AG04449 (cell line): ENCODE measurements at regions of chr19 and their contacts with region 1.

Region 1: DNA sequence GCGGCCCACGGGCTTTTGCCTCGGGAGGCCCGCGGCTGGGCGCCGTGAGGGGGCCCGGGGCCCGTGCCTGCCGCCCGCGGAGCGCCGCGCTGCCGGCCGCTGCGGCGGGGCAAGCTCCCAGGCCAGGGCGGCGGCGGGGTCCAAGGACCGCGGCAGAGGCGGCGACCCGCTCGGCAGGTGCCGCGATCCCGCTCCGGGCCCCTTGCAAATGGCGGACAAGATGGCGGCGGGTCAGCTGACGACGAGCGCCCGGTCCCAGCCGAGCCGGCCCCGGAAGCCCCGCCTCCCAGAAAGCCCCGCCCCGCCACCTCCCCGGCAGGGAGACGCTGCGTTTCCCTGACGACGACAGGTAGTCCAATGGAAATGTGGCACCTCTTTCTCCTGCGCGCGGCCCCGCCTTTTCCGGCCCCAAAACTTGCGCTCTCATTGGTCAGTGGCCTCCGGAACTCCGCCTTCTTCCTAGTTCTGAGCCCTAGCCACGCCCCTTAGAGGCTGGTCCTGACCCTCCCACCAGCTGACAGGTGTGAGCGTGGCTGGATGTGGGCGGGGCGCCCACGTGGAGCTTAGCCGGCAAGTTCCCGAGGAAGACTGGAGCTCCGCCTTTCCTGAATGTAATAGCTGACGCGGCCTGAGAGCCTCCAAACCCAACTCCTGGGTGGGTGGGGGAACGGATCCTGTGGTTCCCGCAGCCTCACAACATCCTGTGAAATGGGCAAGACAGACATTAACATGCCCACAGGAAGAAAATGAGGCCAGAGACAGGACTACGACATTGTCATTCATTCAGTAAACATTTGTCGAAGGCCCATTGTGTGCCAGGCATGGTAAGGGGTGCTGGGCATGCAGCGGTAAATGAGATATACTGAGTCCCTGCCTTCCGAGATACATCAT is at the start of gene AP3D1:
- DNase-seq: peak; percentile 96
- H3K4me3 ChIP-seq: peak within 1 kb of the TSS; percentile 92
- CTCF ChIP-seq: no peak

Region 2: DNA sequence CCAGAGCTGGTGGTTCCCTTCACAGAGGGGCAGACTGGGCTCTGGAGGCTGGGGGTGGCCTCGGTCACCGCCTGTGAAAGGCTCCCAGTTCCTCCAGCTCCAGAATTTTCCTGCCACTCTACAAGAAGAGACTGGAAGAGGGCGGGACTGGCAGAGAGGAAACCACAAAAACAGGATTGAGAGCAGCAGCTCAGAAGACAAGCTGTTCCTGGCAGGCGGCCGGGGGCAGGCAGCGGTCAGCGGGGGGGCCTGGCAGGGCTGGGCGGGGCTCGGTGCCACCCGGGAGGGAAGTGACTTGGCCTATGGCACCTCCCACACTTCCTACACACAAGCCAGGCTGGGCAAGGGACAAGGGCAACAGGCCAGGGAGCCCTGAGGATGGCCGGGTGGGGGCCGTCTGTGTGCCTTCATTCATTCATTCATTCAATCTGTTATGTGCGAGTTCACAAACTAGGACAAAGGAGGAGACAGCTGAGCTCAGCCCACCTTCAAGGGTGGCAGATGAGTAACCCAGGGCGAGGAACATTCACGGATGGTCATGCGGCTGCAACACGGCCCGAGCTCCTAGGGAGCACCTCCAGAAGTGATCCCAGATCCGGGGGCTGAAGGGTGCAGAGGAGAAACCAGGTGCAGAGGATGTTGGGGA is 119.2 kb before region 1 on chr19:
- CTCF ChIA-PET with region 1: no interaction called
- POLR2A ChIA-PET with region 1: no interaction called
- DNase-seq: no peak
- H3K4me3 ChIP-seq: no peak overlapping the region; the same call in 1 of the 2 replicates
- CTCF ChIP-seq: no peak

Region 3: DNA sequence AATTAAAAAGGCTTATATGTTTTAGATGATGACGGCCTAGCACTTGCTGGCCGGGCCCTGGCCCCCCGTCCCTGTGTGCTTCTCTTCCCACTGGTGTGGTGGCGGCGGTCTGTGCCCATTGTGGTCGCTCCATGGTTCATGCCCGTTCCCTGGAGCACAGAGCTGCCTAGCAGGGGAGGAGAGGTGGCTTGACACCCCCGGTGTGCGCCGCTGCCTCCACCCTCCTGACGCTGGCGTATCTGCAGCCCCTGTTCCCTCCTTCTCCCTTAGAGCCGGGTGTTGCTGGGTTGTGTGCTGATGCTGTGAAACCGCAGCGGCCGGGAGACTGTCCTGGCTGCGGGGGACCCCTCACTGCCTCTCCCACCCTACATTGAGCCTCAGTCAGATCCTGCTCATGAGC is 41.3 kb after region 1 on chr19:
- CTCF ChIA-PET with region 1: no interaction called
- POLR2A ChIA-PET with region 1: no interaction called
- DNase-seq: no peak
- H3K4me3 ChIP-seq: no peak overlapping the region
- CTCF ChIP-seq: no peak

Region 4: DNA sequence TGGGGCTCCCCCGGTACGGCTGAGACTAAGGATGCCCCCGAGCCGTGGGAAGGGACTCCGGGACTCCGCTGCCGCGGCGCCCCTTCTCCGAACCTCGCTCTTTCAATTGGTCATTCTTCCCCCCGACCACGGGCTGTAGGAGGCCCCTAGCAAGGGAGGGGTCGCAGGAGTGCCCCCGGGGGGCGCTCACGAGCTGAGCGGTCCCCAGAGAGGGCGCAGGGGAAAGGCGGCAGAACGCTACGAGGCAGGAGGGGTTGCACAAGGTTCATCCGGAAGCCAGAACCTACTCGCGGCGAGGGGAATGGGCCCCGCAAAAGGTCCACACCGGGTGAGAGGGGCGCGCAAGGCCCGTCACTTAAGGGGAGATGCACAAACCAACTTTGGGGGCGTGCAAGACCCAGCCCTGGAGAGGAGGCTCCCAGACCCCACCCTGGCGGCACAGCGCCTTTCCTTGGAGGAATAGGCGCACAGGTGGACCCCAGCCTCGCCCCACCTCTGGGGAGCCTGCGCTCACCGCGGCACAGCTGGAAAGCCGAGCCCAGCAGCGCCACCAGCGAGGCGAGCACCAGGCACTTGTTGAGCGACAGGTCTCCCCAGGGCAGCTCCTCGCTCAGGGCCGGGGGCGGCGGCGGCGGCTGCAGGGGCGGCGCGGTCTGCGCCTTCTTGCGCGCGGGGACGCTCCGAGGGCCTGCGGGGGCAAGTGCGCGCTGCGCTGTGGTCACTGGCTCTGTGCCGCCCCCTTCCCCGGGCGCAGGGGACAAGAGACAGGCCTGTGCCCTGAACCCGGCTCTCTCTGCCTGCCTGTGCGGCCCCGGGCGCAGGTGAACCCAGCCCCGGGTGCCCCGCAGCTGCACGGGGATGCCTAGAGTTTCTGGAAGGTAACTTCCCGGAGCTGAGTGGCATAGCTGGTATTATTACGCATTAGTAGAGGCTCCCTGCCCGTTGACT is 101.8 kb after region 1 on chr19:
- CTCF ChIA-PET with region 1: interaction called, 13 read pairs
- POLR2A ChIA-PET with region 1: no interaction called
- DNase-seq: no peak
- H3K4me3 ChIP-seq: no peak overlapping the region
- CTCF ChIP-seq: peak; percentile 11